Right ventricle myocardium superior (tissue), 1 donor: ENCODE measurements at regions of chr1 and their contacts with region 1.

Region 1: GRCh38 chr1:184827600-184828368 is 73.1 kb upstream of the EDEM3 start:
- DNase-seq: no peak
- ATAC-seq: peak; percentile 78

Region 2: DNA sequence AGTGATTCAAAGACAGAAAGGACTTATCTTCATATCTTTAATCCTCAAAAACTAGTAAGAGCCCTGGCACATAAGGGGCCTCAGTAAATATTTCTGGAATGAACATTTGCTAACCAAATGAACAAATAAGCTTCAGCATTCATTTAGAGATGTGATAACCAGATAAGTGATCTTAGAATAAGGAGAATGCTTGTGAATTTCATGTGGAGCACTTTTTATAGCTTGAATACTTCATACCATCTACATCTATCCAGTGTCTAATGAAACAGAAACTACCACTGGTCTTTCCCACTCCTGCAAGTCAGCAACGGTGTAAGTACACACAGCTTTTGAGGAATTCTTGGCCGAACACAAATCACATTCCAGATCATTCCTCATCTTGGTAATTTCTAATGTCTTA is 111.6 kb before region 1 on chr1:
- intact Hi-C with region 1: no loop called
- DNase-seq: no peak
- ATAC-seq: no peak

Region 3: GRCh38 chr1:184881941-184882913 is 54.4 kb after region 1 on chr1:
- intact Hi-C with region 1: loop called (anchors 10 kb)
- DNase-seq: no peak
- ATAC-seq: peak; percentile 74

Region 4: DNA sequence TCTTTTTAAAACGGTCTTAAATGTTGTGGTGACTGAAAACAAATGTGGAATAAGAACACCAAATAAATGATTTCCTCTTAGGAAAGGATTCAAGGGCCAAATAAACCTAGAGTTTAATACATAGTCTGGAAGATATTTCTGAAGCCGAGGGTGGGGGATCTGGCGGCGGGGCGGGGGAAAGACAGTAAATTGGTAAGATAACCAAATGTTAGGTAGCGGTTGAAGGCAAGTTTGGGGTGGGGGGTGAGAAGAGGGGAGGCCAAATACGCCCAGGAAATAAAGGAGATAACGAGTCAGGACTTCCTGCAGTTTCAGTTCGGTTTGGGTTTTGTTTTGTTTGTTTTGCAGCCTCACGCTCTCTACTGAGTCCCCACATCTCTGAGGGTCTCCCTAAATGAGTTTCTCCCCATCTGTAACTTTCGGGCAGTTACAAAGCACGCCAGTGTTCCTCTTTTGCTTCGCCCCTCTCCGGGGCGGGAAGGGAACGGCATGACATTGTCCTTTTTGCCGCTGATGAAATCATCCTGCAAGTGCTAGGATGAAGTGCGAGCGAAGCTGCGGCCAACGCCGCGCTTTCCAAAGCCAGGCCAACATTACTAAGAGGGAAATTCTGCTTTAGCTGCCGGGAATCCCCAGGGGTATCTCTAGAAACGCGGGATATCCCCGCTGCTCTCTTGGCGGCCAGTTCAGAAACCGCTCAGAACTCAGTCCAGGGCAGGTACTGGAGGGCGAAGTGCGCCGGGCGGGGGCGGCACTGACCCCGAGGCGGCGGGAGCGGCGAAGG is 145.7 kb after region 1 on chr1:
- intact Hi-C with region 1: loop called (anchors 5 kb)
- DNase-seq: peak; percentile 78
- ATAC-seq: peak; percentile 69

Region 5: GRCh38 chr1:186295980-186296379 is 1468.2 kb after region 1 on chr1:
- intact Hi-C with region 1: no loop called
- DNase-seq: no peak
- ATAC-seq: no peak